ENCODE measurements at regions of chr9 and their contacts with region 1.

Region 1: DNA sequence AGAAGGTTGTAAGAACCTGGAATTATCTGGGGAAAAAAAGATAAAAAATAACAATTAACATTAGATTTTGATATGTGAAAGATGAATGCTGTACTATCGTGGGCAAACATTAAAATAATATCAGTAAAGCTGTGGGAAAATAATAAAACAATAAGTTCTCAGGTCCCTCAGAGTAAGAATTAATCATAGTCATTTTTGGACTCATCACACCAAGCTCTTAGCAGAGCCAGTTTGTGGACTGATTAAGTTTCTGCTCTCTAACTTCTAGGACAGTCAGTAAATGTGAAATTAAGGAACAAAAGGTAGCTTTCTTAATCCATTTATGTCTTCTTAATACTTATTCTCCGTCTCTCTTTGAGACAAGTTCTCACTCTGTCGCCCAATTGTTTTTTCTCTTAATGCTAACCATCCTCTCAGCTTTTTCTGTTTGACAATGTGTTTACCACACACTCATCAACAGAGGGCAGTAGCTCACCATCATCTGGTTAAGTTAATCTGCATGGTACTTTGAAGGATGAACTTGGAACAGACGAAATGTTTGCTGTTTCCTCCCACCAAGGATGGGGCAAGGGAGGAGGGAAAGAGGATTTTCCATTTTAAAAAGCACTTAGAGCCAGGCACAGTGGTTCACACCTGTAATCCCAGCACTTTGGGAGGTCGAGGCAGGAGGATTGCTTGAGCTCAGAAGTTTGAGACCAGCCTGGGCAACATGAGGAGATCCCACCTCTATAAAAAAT is 5.3 kb upstream of the ACO1 start:
- DNase-seq: peak; percentile 39 to 73 (median 52)
- ATAC-seq: peak; percentile 89
- H3K4me3 ChIP-seq: no peak overlapping the region
- H3K27ac ChIP-seq: no peak overlapping the region
- H3K4me1 ChIP-seq: peaks cover 5% of the 10 kb centered on the region
- H3K27me3 ChIP-seq: no peaks in the 10 kb centered on the region
- CTCF ChIP-seq: peak; percentile 42 to 96 (median 90)
- POLR2A ChIP-seq: no peak

Region 2: GRCh38 chr9:32426278-32426939 is 47.2 kb after region 1 on chr9:
- intact Hi-C with region 1: loop called (anchors 5 kb)
- DNase-seq: peak; percentile 71 to 91 (median 82)
- ATAC-seq: peak; percentile 90
- H3K4me3 ChIP-seq: no peak overlapping the region
- H3K27ac ChIP-seq: peak overlapping the region; percentile 59 to 87 (median 78)
- H3K4me1 ChIP-seq: peaks cover 19% of the 10 kb centered on the region
- H3K27me3 ChIP-seq: no peaks in the 10 kb centered on the region
- CTCF ChIP-seq: no peak
- POLR2A ChIP-seq: peak in 2 of 3 donors; percentile 13 to 20

Region 3: GRCh38 chr9:32442433-32442832 is 63.3 kb after region 1 on chr9:
- intact Hi-C with region 1: no loop called
- DNase-seq: no peak
- ATAC-seq: no peak
- H3K4me3 ChIP-seq: no peak overlapping the region
- H3K27ac ChIP-seq: no peak overlapping the region
- H3K4me1 ChIP-seq: no peaks in the 10 kb centered on the region
- H3K27me3 ChIP-seq: no peaks in the 10 kb centered on the region
- CTCF ChIP-seq: no peak
- POLR2A ChIP-seq: no peak

Region 4: DNA sequence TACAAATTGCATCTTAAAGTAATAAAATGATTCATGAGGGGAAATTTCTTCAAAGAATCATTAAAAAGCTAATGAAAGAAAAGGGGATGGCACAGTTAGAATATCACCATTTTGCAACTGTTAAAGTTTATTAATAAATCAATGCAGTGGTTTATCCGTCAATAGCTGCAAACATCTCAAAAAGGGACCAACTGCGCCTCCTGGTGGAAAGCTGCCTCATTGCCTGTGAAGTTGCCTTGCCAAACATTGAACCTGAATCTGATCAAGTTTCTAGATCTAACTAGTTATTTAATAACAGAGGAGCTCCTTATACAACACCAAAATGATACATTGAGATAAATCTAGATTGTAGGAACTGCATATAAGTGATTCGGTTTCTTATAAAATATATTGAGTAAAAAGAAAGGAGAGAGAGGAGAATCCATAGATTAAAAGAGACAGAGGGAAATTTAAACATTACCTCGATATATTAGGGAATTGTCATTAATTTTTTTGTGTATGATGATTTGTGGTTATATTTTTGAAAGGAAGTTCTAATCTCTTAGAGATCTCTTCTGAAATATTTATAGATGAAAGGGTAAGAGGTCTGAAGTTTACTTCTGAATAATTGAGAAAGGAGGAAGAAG is 200.7 kb after region 1 on chr9:
- intact Hi-C with region 1: loop called (anchors 5 kb)
- DNase-seq: peak; percentile 67 to 82 (median 74)
- ATAC-seq: peak; percentile 58
- H3K4me3 ChIP-seq: no peak overlapping the region
- H3K27ac ChIP-seq: no peak overlapping the region
- H3K4me1 ChIP-seq: no peaks in the 10 kb centered on the region
- H3K27me3 ChIP-seq: no peaks in the 10 kb centered on the region
- CTCF ChIP-seq: peak; percentile 73 to 92 (median 78)
- POLR2A ChIP-seq: no peak

Region 5: GRCh38 chr9:32968101-32969011 is 589.2 kb after region 1 on chr9:
- intact Hi-C with region 1: loop called (anchors 10 kb)
- DNase-seq: peak; percentile 54 to 73 (median 63)
- ATAC-seq: no peak
- H3K4me3 ChIP-seq: no peak overlapping the region
- H3K27ac ChIP-seq: no peak overlapping the region
- H3K4me1 ChIP-seq: no peaks in the 10 kb centered on the region
- H3K27me3 ChIP-seq: no peaks in the 10 kb centered on the region
- CTCF ChIP-seq: peak in 6 of 7 experiments; percentile 65 to 96 (median 71)
- POLR2A ChIP-seq: no peak

Measured in body of pancreas (tissue), 4 donors.